ENCODE measurements at regions of chr1 and their contacts with region 1.

Region 1: DNA sequence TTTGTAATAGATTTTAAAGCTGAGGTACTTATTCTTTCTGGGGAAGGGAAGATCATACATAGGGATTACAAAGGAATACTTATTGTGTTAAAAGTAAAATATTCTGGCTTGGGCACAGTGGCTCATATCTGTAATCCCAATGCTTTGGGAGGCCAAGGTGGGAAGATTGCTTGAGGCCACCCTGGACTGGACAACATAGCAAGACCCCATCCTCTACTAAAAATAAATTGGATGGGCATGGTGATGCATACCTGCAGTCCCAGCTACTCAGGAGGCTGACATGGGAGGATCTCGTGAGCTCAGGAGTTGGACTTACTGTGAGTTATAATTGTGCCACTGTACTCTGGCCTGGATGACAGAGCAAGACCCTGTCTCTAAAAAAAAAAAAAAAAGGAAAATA is 27.6 kb downstream of the GABPB2 start:
- DNase-seq: no peak
- H3K4me3 ChIP-seq: no peak overlapping the region
- H3K27ac ChIP-seq: no peak overlapping the region
- H3K27me3 ChIP-seq: no peaks in the 10 kb centered on the region
- CTCF ChIP-seq: no peak

Region 2: DNA sequence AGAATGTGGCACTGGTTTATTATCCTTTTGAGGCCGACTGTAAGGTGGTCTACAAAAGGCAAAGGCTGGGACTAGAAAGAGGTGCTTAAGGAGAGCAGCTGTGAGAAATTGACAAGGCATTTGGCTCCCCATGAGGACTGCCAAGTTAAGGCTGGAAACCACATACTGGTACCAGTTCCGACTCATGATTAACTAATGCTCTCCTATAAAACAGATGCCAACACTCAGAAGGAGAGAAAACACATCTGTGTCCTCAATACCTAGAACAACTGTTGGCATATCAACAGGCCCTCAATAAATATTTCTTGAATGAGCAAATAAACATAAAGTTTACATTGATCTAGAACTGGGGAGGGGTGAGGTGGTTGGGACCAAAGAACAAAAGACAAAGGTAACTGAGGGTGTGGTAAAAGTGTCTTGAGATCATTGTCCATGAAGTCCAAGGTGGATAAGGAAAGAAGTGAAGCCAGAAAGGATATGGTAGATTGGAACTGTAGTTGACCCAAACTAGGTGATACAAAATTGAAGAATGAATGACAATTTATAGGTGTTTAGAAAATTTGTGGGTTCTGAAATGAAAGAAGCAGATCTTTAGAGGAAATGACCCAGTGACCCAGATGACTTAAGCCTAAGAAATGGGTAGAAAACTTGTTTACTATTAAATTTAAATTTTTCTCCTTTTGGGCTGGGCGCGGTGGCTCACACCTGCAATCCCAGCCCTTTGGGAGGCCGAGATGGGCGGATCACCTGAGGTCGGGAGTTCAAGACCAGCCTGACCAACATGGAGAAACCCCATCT is 501.8 kb before region 1 on chr1:
- CTCF ChIA-PET with region 1: no interaction called
- POLR2A ChIA-PET with region 1: no interaction called
- DNase-seq: no peak
- H3K4me3 ChIP-seq: no peak overlapping the region
- H3K27ac ChIP-seq: no peak overlapping the region
- H3K27me3 ChIP-seq: no peaks in the 10 kb centered on the region
- CTCF ChIP-seq: no peak

Region 3: DNA sequence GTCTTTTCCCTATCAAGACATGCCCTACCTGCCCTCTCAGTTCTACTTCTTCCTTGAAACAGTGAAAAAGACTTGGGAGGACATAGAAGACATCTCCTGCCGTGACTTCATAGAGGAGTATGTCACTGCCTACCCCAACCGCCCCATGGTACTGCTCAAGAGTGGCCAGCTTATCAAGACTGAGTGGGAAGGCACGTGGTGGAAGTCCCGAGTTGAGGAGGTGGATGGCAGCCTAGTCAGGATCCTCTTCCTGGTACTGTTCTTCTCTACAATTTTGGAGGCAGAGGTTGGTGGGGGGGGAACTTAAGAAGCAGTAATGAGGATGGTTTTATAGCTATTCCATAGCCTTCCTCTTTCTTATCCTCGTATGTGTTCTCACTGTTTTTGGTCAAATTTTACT is 153.3 kb before region 1 on chr1:
- CTCF ChIA-PET with region 1: no interaction called
- POLR2A ChIA-PET with region 1: no interaction called
- DNase-seq: no peak
- H3K4me3 ChIP-seq: no peak overlapping the region
- H3K27ac ChIP-seq: no peak overlapping the region
- H3K27me3 ChIP-seq: no peaks in the 10 kb centered on the region
- CTCF ChIP-seq: no peak

Region 4: DNA sequence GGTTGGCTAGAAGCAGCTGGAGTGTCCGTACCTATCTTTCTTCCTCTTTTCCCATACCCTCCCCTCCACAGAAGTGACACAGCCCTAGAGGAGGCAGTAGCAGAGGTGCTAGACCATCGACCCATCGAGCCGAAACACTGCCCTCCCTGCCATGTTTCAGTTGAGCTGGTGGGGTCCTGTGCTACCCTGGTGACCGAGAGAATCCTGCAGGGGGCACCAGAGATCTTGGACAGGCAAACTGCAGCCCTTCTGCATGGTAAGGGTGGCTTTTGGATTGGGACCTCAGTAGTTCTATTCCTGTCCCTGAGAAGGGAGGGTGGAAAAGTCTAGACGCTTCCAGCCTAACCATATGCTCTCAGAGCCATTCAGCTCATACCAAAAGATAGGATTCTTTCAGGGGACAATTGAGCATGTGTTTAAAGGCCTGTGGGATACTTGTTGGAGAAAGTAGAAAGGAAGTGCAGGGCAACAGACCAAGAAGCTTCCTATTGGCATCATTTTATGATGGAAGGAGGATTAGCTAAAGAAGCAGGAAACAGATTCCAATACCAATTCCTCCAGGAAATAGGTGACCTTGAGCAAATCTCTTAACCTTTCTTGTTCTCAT is 73.5 kb before region 1 on chr1:
- CTCF ChIA-PET with region 1: interaction called, 22 read pairs
- POLR2A ChIA-PET with region 1: no interaction called
- DNase-seq: no peak
- H3K4me3 ChIP-seq: no peak overlapping the region
- H3K27ac ChIP-seq: no peak overlapping the region
- H3K27me3 ChIP-seq: no peaks in the 10 kb centered on the region
- CTCF ChIP-seq: peak; percentile 80

Region 5: GRCh38 chr1:151118021-151118420 is 19.9 kb after region 1 on chr1:
- CTCF ChIA-PET with region 1: interaction called, 66 read pairs
- POLR2A ChIA-PET with region 1: interaction called, 3 read pairs
- DNase-seq: no peak
- H3K4me3 ChIP-seq: no peak overlapping the region
- H3K27ac ChIP-seq: no peak overlapping the region
- H3K27me3 ChIP-seq: no peaks in the 10 kb centered on the region
- CTCF ChIP-seq: no peak

Region 6: GRCh38 chr1:151130987-151131586 is 33.0 kb after region 1 on chr1:
- CTCF ChIA-PET with region 1: interaction called, 18 read pairs
- POLR2A ChIA-PET with region 1: no interaction called
- DNase-seq: peak; percentile 52
- H3K4me3 ChIP-seq: peak overlapping the region; percentile 35
- H3K27ac ChIP-seq: no peak overlapping the region
- H3K27me3 ChIP-seq: peaks cover 10% of the 10 kb centered on the region
- CTCF ChIP-seq: no peak

Region 7: DNA sequence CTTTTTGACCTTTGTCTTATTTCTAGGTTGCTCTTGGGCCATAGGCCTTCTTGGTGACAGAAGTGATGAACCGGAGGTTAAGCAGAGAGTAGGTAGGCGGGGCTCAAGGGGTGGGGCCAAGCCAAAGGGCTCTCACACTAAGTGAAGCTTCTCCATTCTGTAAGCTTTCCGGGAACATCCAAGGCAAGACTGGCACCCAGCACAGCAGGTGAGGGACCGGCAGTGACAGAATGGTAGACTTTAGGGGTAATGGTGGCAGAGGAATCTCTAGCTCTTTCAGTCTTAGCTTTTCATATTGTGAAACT is 58.3 kb after region 1 on chr1 and contains the start of gene TNFAIP8L2:
- CTCF ChIA-PET with region 1: interaction called, 162 read pairs
- POLR2A ChIA-PET with region 1: interaction called, 6 read pairs
- DNase-seq: no peak
- H3K4me3 ChIP-seq: no peak within 1 kb of the TSS
- H3K27ac ChIP-seq: no peak within 1 kb of the TSS
- H3K27me3 ChIP-seq: no peaks in the 10 kb centered on the region
- CTCF ChIP-seq: no peak
- polyA plus RNA-seq, gene TNFAIP8L2: not detected in 2 replicates

Region 8: GRCh38 chr1:151175910-151176309 is 77.8 kb after region 1 on chr1 and contains the start of gene TMOD4:
- CTCF ChIA-PET with region 1: interaction called, 19 read pairs
- POLR2A ChIA-PET with region 1: interaction called, 3 read pairs
- DNase-seq: no peak
- H3K4me3 ChIP-seq: no peak within 1 kb of the TSS
- H3K27ac ChIP-seq: peak within 1 kb of the TSS; percentile 39
- H3K27me3 ChIP-seq: no peaks in the 10 kb centered on the region
- CTCF ChIP-seq: peak; percentile 75
- polyA plus RNA-seq, gene TMOD4: not detected in 2 replicates

Region 9: DNA sequence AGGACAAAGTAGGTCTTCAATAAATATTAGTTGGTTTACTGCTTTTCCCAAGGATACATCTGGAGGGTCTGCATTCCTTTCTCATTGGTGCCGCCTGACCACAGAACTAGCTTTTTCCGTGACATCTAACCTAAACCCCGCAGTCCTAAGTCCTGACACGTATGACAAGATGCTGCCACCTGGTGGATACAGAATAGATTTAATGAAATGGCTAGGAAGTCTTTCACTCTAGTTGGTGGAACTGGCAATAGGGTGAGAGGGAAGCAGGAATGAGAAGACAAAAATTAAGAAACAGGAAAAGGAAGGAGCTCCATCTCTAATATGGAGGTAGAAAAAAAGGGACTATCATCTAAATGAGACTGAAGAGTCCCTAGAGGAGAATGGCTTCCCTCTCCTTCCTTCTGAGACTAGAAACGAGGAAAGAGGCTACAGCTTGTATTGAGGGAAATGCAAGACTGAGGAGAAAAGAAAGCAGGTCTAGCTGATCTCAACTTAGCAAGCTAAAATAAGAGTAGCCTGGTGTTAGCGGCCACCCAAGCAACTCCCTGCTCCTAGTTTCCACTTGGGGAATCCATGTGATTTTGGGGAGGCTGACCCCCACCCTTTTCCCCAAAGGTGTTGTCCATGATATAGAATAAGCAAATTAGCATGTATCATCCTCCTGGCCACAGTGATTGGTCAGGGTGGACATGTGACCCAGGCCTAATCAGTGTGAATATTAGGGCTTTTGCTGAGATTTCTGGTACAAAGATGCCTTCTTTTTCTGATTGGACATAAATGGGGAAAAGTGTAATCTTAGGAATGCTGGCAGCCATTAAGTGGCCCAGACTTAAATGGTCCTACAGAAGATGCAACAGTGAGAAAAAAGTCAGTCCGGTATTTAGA is 243.0 kb after region 1 on chr1:
- CTCF ChIA-PET with region 1: interaction called, 13 read pairs
- POLR2A ChIA-PET with region 1: no interaction called
- DNase-seq: peak; percentile 72
- H3K4me3 ChIP-seq: no peak overlapping the region
- H3K27ac ChIP-seq: peak overlapping the region; percentile 68
- H3K27me3 ChIP-seq: no peaks in the 10 kb centered on the region
- CTCF ChIP-seq: peak; percentile 64

Region 10: GRCh38 chr1:152519851-152520250 is 1421.7 kb after region 1 on chr1:
- CTCF ChIA-PET with region 1: no interaction called
- POLR2A ChIA-PET with region 1: no interaction called
- DNase-seq: no peak
- H3K4me3 ChIP-seq: no peak overlapping the region
- H3K27ac ChIP-seq: no peak overlapping the region
- H3K27me3 ChIP-seq: no peaks in the 10 kb centered on the region
- CTCF ChIP-seq: no peak

Measured in AG04450 (cell line).